ENCODE measurements at regions of chr9 and their contacts with region 1.

Region 1: DNA sequence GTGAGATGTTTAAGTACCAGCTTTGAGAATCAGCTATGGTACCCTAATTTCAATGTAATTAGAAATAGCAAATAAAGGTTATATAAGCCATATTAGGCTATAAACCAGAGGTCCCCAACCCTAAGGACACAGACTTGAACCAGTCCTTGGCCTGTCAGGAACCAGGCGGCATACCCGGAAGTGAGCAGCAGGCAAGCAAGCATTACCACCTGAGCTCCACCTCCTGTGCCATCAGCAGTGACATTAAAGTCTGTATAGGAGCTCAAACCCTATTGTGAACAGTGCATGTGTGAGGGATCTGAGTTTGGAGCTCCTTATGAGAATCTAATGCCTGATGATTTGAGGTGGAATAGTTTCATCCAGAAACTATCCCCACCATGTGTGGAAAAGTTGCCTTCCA is 1009.5 kb downstream of the PTPRD start:
- DNase-seq: no peak
- H3K4me3 ChIP-seq: no peak overlapping the region
- H3K4me1 ChIP-seq: peaks cover 9% of the 10 kb centered on the region
- H3K27me3 ChIP-seq: no peaks in the 10 kb centered on the region

Region 2: DNA sequence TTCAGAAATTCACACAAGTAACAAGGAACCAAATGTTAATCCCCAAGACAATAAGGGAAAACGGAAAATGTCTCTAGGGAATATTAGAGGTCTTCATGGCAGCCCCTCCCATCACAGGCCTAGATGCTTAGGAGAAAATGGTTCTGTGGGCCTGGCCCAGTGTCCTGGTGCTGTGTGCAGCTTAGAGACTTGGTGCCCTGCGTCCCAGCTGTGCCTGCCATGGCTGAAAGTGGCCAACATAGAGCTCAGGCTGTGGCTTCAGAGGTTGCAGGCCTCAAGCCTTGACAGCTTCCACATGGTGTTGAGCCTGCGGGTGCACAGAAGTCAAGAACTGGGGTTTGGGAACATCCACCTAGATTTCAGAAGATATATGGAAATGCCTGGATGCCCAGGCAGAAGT is 67.1 kb after region 1 on chr9:
- in situ Hi-C with region 1: no loop called
- DNase-seq: no peak
- H3K4me3 ChIP-seq: no peak overlapping the region
- H3K4me1 ChIP-seq: no peaks in the 10 kb centered on the region
- H3K27me3 ChIP-seq: no peaks in the 10 kb centered on the region

Region 3: GRCh38 chr9:9790216-9790872 is 187.0 kb after region 1 on chr9:
- in situ Hi-C with region 1: loop called (anchors 10 kb)
- DNase-seq: peak; percentile 69 to 72
- H3K4me3 ChIP-seq: no peak overlapping the region
- H3K4me1 ChIP-seq: no peaks in the 10 kb centered on the region
- H3K27me3 ChIP-seq: 0 out of 2 replicates have a peak, but pooled peaks cover 4% of the 10 kb centered on the region

Region 4: DNA sequence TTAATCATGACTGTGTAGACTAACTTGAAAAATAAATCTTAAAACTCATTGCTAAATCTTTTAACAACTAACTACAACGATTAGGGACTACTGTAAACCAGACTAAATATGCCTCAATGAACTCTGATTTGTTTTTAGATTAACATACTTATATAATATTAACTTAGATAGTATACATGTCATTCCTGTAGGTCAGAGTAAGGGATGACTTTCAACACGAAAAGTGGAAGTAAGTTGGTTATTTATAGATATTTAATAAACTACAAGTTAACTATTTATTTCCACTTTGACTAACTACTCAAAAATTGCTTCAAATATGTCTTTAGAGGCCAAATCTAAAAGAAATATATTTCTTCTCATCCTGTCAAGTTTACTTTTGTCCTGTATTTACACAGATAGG is 213.8 kb after region 1 on chr9:
- in situ Hi-C with region 1: no loop called
- DNase-seq: no peak
- H3K4me3 ChIP-seq: no peak overlapping the region
- H3K4me1 ChIP-seq: no peaks in the 10 kb centered on the region
- H3K27me3 ChIP-seq: no peaks in the 10 kb centered on the region